PC-3 (cell line): ENCODE measurements at regions of chr7 and their contacts with region 1.

Region 1: DNA sequence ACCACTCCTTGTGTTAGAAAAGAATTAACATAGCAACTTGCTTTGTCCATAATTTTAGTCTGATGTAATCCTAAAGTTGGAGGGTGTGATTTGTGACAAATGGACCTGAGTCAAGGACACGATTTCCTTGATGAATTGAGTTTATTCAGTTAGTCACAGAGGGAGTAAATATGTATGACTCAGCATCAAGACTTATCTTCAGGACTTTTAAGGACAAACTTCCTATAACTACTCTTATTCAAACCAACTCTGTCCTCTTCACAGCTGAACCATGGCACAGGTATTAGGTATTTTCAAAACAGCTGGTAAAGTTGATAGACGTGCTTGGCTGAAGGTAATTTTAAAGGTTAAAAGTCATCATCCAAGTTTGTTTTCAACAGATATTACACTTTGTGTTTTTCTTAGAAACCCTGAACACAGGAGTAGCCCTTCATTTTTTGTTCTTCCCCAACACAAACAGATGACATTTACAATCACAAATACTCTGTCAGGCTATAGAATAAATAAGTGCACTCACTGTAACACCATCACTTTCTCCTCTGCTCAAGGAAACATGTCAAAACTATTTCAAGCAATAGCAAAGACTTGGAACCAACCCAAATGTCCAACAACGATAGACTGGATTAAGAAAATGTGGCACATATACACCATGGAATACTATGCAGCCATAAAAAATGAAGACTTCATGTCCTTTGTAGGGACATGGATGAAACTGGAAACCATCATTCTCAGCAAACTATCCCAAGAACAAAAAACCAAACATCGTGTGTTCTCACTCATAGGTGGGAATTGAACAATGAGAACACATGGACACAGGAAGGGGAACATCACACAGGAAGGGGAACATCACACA is 54.5 kb downstream of the COA1 start:
- DNase-seq: peak; percentile 90
- ATAC-seq: peak; percentile 98
- H3K4me3 ChIP-seq: no peak overlapping the region
- H3K27ac ChIP-seq: peak overlapping the region; percentile 78
- H3K4me1 ChIP-seq: peaks cover 13% of the 10 kb centered on the region
- H3K27me3 ChIP-seq: no peaks in the 10 kb centered on the region
- CTCF ChIP-seq: no peak

Region 2: DNA sequence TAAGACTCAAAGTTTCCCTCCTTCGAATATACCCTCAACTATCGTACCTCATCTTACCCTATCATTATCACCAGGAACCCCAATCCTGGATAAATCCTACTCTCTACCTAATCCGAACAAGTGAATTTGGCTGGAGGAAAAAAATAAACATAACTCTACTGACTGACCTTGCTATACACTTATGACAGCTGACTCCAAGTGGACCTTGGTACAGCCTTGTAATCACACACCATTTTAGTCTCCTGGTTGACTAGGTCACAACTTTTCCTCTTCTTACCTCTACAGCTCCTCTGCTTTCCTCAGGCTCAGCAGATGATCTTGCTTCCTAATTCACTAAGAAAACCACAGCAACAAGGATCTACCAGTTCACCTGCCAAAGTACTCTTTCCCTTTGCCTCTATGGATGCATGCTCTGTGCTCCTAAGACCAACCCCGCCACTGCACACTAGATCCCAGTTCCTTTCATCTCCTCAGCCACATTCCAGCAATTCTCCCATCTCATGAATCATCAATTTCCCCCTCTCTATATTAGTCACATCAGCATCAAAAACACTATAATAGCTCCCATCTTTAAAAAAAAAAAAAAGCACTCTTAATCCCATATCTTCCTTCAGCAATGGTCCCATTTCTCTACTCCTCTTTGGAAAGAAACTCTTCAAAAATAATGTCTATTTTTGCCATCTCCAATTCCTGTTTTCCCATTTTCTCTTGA is 19.0 kb after region 1 on chr7:
- CTCF ChIA-PET with region 1: no interaction called
- POLR2A ChIA-PET with region 1: no interaction called
- intact Hi-C with region 1: loop called (anchors 2 kb)
- DNase-seq: peak; percentile 66
- ATAC-seq: peak; percentile 44
- H3K4me3 ChIP-seq: no peak overlapping the region
- H3K27ac ChIP-seq: peak overlapping the region; percentile 75
- H3K4me1 ChIP-seq: peaks cover 56% of the 10 kb centered on the region
- H3K27me3 ChIP-seq: no peaks in the 10 kb centered on the region
- CTCF ChIP-seq: no peak

Region 3: GRCh38 chr7:43834463-43835251 is 159.8 kb after region 1 on chr7:
- CTCF ChIA-PET with region 1: no interaction called
- POLR2A ChIA-PET with region 1: no interaction called
- intact Hi-C with region 1: no loop called
- DNase-seq: peak; percentile 46
- ATAC-seq: no peak
- H3K4me3 ChIP-seq: no peak overlapping the region
- H3K27ac ChIP-seq: no peak overlapping the region
- H3K4me1 ChIP-seq: 0 out of 2 replicates have a peak, but pooled peaks cover 3% of the 10 kb centered on the region
- H3K27me3 ChIP-seq: no peaks in the 10 kb centered on the region
- CTCF ChIP-seq: no peak